ENCODE measurements at regions of chr5 and their contacts with region 1.

Region 1: GRCh38 chr5:138337685-138338410 is at the start of gene FAM53C:
- DNase-seq: peak; percentile 89 to 91
- ATAC-seq: peak; percentile 92 to 93
- H3K4me3 ChIP-seq: peak within 1 kb of the TSS; percentile 75 to 95 (median 93)
- H3K27ac ChIP-seq: peak within 1 kb of the TSS; percentile 89 to 98 (median 94)
- H3K4me1 ChIP-seq: peaks cover 24 to 35% of the 10 kb centered on the region in 2 donors
- H3K27me3 ChIP-seq: no peaks in the 10 kb centered on the region
- CTCF ChIP-seq: peak in 2 of 5 experiments; percentile 39 to 66
- POLR2A ChIP-seq: peak; percentile 96 to 99
- total RNA-seq, gene FAM53C: 35.7 to 74.7 (median 41.0) TPM

Region 2: GRCh38 chr5:138128334-138128733 is 209.5 kb before region 1 on chr5:
- in situ Hi-C with region 1: no loop called
- intact Hi-C with region 1: no loop called
- DNase-seq: no peak
- ATAC-seq: no peak
- H3K4me3 ChIP-seq: no peak overlapping the region
- H3K27ac ChIP-seq: no peak overlapping the region
- H3K4me1 ChIP-seq: no peaks in the 10 kb centered on the region
- H3K27me3 ChIP-seq: no peaks in the 10 kb centered on the region
- CTCF ChIP-seq: no peak
- POLR2A ChIP-seq: no peak

Region 3: GRCh38 chr5:138213161-138214029 is 124.5 kb before region 1 on chr5 and contains the start of gene CDC23:
- in situ Hi-C with region 1: loop called in 1 of 4 experiments (anchors 10 kb)
- intact Hi-C with region 1: loop called (anchors 5 kb)
- DNase-seq: peak; percentile 94 to 95
- ATAC-seq: peak; percentile 100
- H3K4me3 ChIP-seq: peak within 1 kb of the TSS; percentile 69 to 99 (median 95)
- H3K27ac ChIP-seq: peak within 1 kb of the TSS; percentile 81 to 93 (median 86)
- H3K4me1 ChIP-seq: peaks cover 21 to 26% of the 10 kb centered on the region in 2 donors
- H3K27me3 ChIP-seq: no peaks in the 10 kb centered on the region
- CTCF ChIP-seq: no peak
- POLR2A ChIP-seq: peak; percentile 56 to 65
- total RNA-seq, gene CDC23: 7.7 to 11.7 (median 10.4) TPM

Region 4: DNA sequence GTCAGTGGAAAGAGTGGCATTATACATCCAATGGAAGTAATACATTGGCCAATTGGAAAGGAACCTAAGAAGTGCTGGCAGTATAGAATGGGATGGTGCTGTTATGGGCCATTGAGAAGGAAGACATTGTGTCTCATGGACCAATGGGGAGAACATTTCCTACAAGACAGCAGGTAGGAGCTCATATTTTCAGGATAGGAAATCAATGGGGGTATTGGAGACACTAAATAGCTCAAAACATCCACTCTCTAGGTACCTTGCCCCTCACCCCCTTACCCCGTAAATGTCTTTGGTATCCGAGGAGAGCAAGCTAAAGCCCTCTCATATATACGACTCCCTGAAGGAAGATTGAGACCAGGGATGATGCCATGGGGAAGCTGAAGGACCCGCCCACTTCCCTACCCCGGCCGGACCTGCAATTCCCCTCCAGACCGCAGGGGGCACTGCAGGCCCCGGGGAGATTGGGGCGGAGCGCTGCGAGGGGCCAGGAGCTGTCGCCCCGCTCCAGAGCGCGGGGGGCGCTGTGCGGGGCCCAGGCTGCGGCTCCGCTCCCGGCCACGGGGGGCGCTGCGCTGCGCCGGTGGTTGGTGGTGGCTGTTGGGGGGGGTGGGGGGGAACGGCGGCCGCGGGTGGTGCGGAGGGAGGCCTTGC is 14.3 kb after region 1 on chr5 and contains the start of gene KDM3B:
- in situ Hi-C with region 1: no loop called
- intact Hi-C with region 1: loop called (anchors 2 kb)
- DNase-seq: peak; percentile 42 to 83
- ATAC-seq: peak; percentile 50 to 80
- H3K4me3 ChIP-seq: peak within 1 kb of the TSS; percentile 73 to 98 (median 91)
- H3K27ac ChIP-seq: peak within 1 kb of the TSS; percentile 89 to 98 (median 95)
- H3K4me1 ChIP-seq: peaks cover 28 to 41% of the 10 kb centered on the region in 2 donors
- H3K27me3 ChIP-seq: no peaks in the 10 kb centered on the region
- CTCF ChIP-seq: peak; percentile 85 to 100 (median 97)
- POLR2A ChIP-seq: no peak
- total RNA-seq, gene KDM3B: 49.4 to 100 (median 74.2) TPM

Region 5: DNA sequence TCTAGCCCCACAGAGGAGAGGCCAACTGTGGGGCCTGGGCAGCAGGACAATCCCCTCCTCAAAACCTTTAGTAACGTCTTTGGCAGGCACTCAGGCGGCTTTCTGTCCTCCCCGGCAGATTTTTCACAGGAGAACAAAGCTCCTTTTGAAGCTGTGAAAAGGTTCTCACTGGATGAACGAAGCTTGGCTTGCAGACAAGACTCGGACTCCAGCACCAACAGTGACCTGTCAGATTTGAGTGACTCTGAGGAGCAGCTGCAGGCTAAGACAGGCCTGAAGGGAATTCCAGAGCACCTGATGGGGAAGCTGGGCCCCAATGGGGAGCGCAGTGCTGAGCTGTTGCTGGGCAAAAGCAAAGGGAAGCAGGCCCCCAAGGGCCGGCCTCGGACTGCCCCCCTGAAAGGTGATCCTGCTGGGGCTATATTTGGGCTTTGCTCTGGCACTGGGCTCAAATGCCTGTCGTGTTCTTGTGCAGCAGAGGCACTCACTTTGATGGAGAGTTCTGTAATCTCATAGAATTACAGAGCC is 54.1 kb after region 1 on chr5:
- in situ Hi-C with region 1: no loop called
- intact Hi-C with region 1: loop called (anchors 1 kb)
- DNase-seq: peak; percentile 57 to 79
- ATAC-seq: peak; percentile 48 to 69
- H3K4me3 ChIP-seq: no peak overlapping the region
- H3K27ac ChIP-seq: peak overlapping the region; percentile 82 to 95 (median 90)
- H3K4me1 ChIP-seq: peaks cover 50 to 59% of the 10 kb centered on the region in 2 donors
- H3K27me3 ChIP-seq: no peaks in the 10 kb centered on the region
- CTCF ChIP-seq: no peak
- POLR2A ChIP-seq: no peak

Region 6: GRCh38 chr5:138449501-138450239 is 111.8 kb after region 1 on chr5:
- in situ Hi-C with region 1: no loop called
- intact Hi-C with region 1: no loop called
- DNase-seq: peak; percentile 70 to 81
- ATAC-seq: peak; percentile 91 to 97
- H3K4me3 ChIP-seq: no peak overlapping the region
- H3K27ac ChIP-seq: no peak overlapping the region
- H3K4me1 ChIP-seq: peaks cover 0 to 7% of the 10 kb centered on the region in 2 donors
- H3K27me3 ChIP-seq: no peaks in the 10 kb centered on the region
- CTCF ChIP-seq: peak; percentile 91 to 96 (median 94)
- POLR2A ChIP-seq: no peak

Region 7: GRCh38 chr5:138542956-138543729 is 205.3 kb after region 1 on chr5 and contains the start of gene ETF1:
- in situ Hi-C with region 1: no loop called
- intact Hi-C with region 1: loop called (anchors 1 kb)
- DNase-seq: peak; percentile 100
- ATAC-seq: peak; percentile 86 to 87
- H3K4me3 ChIP-seq: peak within 1 kb of the TSS; percentile 85 to 98 (median 96)
- H3K27ac ChIP-seq: peak within 1 kb of the TSS; percentile 97 to 100 (median 98)
- H3K4me1 ChIP-seq: peaks cover 72 to 73% of the 10 kb centered on the region in 2 donors
- H3K27me3 ChIP-seq: no peaks in the 10 kb centered on the region
- CTCF ChIP-seq: peak in 1 of 5 experiments; percentile 17
- POLR2A ChIP-seq: peak; percentile 100
- total RNA-seq, gene ETF1: 99.9 to 139 (median 117) TPM

Measured in gastrocnemius medialis (tissue), 4 donors.